A549 (cell line): ENCODE measurements at regions of chr10 and their contacts with region 1.

Region 1: DNA sequence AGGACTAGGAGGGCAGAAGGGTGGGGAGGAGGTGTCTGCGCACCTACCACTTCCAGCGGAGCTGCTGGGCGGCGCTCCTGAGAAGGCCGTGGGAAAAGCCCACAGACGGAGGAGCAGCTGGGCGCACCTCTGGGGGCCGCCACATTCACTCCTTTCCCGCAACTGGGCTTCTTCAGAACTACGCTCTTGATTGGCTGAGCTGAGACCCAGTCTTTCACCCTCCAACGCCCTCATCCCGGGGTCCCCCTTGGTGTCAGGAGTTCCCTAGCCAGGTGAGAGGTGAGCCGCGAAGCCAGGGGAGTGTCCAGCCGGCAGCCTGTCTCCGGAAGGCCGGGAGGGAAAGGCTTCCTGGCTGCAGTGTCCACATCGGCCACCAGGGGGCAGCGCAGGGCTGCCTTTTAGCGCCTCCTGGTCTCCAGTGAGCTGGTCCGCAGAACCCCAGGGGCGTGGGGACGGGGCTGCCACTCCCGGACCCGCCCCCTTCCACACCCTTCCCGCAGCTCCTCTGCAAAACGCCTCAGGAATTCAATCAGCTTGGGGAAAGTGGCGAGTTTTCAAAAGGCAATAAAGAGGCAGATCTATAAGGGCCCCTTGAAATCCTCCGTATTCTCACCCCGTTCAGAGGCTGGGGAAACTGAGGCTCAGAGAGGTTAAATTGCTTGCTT is 98.8 kb downstream of the CHST15 start:
- DNase-seq: peak; percentile 83 to 91
- ATAC-seq: peak; percentile 73 to 87
- H3K4me3 ChIP-seq: peak overlapping the region; percentile 57
- H3K27ac ChIP-seq: peak overlapping the region; percentile 68 to 87
- H3K4me1 ChIP-seq: peaks cover 27% of the 10 kb centered on the region
- CTCF ChIP-seq: peak; percentile 96
- EP300 ChIP-seq: no peak
- POLR2A ChIP-seq: no peak
- RAD21 ChIP-seq: peak; percentile 93 to 99

Region 2: GRCh38 chr10:123948030-123948823 is 46.3 kb before region 1 on chr10:
- CTCF ChIA-PET with region 1: no interaction called
- POLR2A ChIA-PET with region 1: no interaction called
- DNase-seq: no peak
- ATAC-seq: no peak
- H3K4me3 ChIP-seq: no peak overlapping the region
- H3K27ac ChIP-seq: no peak overlapping the region
- H3K4me1 ChIP-seq: no peaks in the 10 kb centered on the region
- CTCF ChIP-seq: no peak
- EP300 ChIP-seq: no peak
- POLR2A ChIP-seq: no peak
- RAD21 ChIP-seq: no peak

Region 3: DNA sequence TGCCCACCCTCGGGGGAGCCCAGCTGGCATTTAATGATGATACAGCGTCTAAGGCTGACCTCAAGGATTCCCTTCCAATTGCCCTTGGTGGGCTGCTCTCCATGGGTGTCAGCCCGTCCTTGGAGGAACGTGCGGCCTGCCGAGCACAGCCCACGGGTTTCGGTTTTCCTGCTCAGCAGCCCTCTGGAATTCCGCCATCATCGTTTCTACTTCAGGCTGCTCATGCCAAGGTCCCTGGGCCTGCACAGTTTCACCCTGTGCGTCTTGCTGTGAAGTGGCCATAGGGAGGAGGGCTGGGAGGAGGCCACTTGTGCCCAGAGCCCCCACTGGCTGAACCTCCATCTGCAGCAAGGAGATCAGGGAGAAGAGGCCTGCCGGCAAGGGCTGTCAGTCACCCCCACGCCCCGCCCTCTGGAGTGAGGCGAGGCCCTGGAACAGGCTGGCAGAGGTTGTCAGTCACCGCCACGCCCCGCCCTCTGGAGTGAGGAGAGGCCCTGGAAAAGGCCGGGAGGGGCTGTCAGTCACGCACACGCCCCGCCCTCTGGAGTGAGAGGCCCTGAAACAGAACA is 16.1 kb after region 1 on chr10:
- CTCF ChIA-PET with region 1: interaction called, 38 read pairs
- POLR2A ChIA-PET with region 1: no interaction called
- DNase-seq: no peak
- ATAC-seq: peak in 1 of 2 experiments; percentile 47; a peak in 2 of 6 replicates
- H3K4me3 ChIP-seq: no peak overlapping the region
- H3K27ac ChIP-seq: no peak overlapping the region
- H3K4me1 ChIP-seq: no peaks in the 10 kb centered on the region
- CTCF ChIP-seq: no peak
- EP300 ChIP-seq: no peak
- POLR2A ChIP-seq: no peak
- RAD21 ChIP-seq: no peak

Region 4: DNA sequence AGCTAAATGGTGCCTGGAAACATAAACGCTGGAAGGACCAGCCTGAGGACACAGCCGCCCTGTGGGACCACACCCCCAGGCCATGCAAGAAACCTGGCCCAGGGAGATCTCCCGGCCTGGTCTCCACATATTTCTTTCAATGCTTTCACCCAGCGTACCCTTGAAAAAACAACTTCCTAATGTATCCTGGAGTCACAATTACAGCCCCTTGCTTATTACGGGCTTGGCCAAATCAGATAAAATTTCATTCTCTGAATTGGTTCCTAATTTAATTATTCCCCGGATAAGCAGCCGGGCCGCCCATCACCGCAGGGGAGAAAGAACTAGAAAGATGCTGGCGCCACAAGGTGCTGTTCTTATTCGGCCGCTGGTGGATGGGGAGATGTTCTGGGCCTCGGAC is 87.1 kb after region 1 on chr10:
- CTCF ChIA-PET with region 1: interaction called, 14 read pairs
- POLR2A ChIA-PET with region 1: no interaction called
- DNase-seq: no peak
- ATAC-seq: no peak
- H3K4me3 ChIP-seq: no peak overlapping the region
- H3K27ac ChIP-seq: no peak overlapping the region
- H3K4me1 ChIP-seq: no peaks in the 10 kb centered on the region
- CTCF ChIP-seq: no peak
- EP300 ChIP-seq: no peak
- POLR2A ChIP-seq: no peak
- RAD21 ChIP-seq: no peak

Region 5: GRCh38 chr10:124106241-124106879 is 111.8 kb after region 1 on chr10:
- CTCF ChIA-PET with region 1: interaction called, 20 read pairs
- POLR2A ChIA-PET with region 1: no interaction called
- DNase-seq: peak; percentile 44 to 55
- ATAC-seq: peak; percentile 42 to 71; a peak in 3 of 6 replicates
- H3K4me3 ChIP-seq: no peak overlapping the region
- H3K27ac ChIP-seq: peak overlapping the region; percentile 50 to 80
- H3K4me1 ChIP-seq: peaks cover 27% of the 10 kb centered on the region
- CTCF ChIP-seq: no peak
- EP300 ChIP-seq: no peak
- POLR2A ChIP-seq: no peak
- RAD21 ChIP-seq: peak in 1 of 2 experiments; percentile 5; a peak in 1 of 5 replicates

Region 6: DNA sequence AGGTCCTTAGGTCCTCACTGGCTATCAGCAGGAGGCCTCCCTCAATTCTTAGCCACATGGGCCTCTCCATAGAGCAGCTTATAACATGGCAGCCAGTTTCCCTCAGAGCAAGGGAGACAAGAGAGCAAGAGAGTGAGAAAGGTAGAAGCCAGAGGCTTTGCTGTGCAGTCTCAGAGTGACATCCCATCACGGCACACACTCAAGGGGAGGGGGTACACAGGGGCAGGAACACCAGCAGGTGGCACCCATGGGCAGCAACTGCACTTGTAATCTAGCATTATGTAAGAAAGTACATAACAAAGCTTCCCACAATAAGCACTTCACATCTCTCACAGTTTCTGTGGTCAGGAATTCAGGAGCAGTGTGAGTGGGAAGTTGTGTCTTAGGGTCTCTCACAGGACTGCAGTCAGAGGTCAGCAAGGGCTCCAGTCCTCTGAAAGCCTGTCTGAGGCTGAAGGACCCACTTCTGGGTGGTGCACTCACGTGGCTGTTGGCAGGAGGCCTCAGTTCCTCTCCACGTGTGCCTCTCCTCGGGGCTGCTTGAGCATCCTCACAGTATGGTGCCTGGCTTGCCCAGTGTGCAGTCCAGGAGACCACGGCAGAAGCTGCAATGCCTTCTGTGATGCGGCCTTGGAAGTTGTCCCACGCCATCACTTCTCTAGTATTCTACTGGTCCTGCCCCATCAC is 264.7 kb after region 1 on chr10:
- CTCF ChIA-PET with region 1: interaction called, 14 read pairs
- POLR2A ChIA-PET with region 1: no interaction called
- DNase-seq: peak in 1 of 2 experiments; percentile 13
- ATAC-seq: peak in 1 of 2 experiments; percentile 64; a peak in 3 of 6 replicates
- H3K4me3 ChIP-seq: no peak overlapping the region
- H3K27ac ChIP-seq: no peak overlapping the region
- H3K4me1 ChIP-seq: no peaks in the 10 kb centered on the region
- CTCF ChIP-seq: no peak
- EP300 ChIP-seq: no peak
- POLR2A ChIP-seq: no peak
- RAD21 ChIP-seq: peak in 1 of 2 experiments; percentile 34; a peak in 1 of 5 replicates

Region 7: GRCh38 chr10:124306520-124306919 is 312.0 kb after region 1 on chr10:
- CTCF ChIA-PET with region 1: no interaction called
- POLR2A ChIA-PET with region 1: no interaction called
- DNase-seq: no peak
- ATAC-seq: no peak
- H3K4me3 ChIP-seq: no peak overlapping the region
- H3K27ac ChIP-seq: no peak overlapping the region
- H3K4me1 ChIP-seq: no peaks in the 10 kb centered on the region
- CTCF ChIP-seq: no peak
- EP300 ChIP-seq: no peak
- POLR2A ChIP-seq: no peak
- RAD21 ChIP-seq: no peak

Region 8: DNA sequence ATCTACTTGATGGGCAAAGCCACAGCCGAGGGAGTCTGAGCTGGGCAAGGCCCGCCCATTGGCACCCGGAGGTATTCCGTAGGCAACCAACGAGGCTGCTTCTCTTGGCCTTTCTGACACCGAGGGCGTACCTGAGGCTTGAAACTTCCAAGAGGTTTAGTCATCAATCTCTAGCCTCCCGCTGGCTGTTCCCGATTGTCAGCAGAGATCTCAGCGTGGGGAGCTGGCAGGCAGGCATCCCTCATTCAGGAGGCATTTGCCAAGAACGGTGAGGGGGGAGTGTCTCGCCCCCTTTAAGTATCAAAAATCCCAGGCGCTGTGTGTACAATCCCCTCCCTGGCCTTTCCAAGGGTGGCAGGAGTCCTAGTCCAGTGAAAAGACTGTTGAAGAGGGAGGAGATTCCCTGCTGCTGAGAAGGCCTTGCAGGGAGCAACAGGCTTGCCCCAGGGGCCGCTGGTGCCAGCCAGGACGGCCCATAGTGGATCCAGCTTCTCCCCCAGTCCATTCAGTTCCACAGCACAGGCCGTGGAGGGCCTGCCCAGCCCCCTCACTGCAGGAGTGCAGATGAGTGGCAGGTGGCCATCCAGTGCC is 384.4 kb after region 1 on chr10:
- CTCF ChIA-PET with region 1: interaction called, 581 read pairs
- POLR2A ChIA-PET with region 1: no interaction called
- DNase-seq: peak in 1 of 2 experiments; percentile 34
- ATAC-seq: peak; percentile 40 to 52; a peak in 4 of 6 replicates
- H3K4me3 ChIP-seq: no peak overlapping the region
- H3K27ac ChIP-seq: no peak overlapping the region
- H3K4me1 ChIP-seq: no peaks in the 10 kb centered on the region
- CTCF ChIP-seq: no peak
- EP300 ChIP-seq: no peak
- POLR2A ChIP-seq: no peak
- RAD21 ChIP-seq: no peak

Region 9: GRCh38 chr10:124494046-124494807 is 499.7 kb after region 1 on chr10:
- CTCF ChIA-PET with region 1: interaction called, 3 read pairs
- POLR2A ChIA-PET with region 1: interaction called, 11 read pairs
- DNase-seq: no peak
- ATAC-seq: 0 out of 6 replicates have a peak, but pooled peaks of 1 of the 2 experiments have one; percentile 19
- H3K4me3 ChIP-seq: no peak overlapping the region
- H3K27ac ChIP-seq: no peak overlapping the region
- H3K4me1 ChIP-seq: no peaks in the 10 kb centered on the region
- CTCF ChIP-seq: no peak
- EP300 ChIP-seq: no peak
- POLR2A ChIP-seq: no peak
- RAD21 ChIP-seq: no peak